ENCODE measurements at regions of chrX and their contacts with region 1.

Region 1: GRCh38 chrX:107716816-107717700 is 58.5 kb downstream of the TSC22D3 start:
- DNase-seq: peak; percentile 87 to 94 (median 93)
- H3K4me3 ChIP-seq: peak overlapping the region; percentile 58 to 91 (median 76)
- H3K27ac ChIP-seq: peak overlapping the region; percentile 73 to 81
- H3K4me1 ChIP-seq: peaks cover 10 to 54% (median 41%) of the 10 kb centered on the region in 4 experiments
- H3K27me3 ChIP-seq: peaks cover 0 to 16% (median 0%) of the 10 kb centered on the region in 5 experiments

Region 2: DNA sequence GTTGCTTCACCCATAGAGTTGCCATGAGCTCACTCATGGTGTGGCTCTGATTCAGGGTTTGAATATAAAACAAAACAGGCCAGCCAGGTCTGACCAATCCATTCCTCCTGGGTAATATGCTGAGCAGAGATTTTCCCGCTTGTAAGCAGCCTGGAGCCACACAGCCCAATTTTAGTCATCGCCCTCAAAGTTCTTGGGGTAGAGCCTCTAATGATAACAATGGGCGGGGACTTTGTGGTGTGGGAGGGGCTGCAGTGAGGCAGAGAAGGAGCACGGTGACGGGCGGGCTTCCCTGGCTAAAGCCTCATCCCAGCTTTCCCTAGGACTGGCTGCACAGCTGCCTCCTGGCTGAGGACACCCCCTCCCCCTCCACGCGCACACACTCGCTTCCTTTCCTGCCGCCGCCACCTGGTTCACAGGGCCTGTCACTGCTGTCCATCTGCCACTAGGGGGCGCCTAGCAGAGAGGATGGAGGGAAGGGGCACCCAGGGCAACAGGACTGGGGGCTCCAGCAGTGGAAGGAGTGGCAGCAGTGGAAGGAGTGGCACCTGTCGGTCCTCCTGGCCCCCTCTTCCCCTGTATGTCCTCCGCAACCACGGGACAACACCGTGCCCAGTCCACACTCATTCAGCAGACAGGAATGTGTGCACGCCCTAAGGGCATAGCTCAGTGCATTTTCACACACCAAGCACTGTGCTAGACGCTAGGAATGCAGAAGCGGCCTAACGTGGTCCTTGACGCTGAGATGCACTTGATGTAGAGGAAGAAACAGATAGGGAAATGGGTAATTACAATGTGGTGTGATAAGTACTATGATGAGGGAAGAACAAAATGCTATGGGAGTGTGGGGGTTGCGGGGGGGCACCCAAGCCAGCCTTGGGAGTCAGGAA is 61.9 kb before region 1 on chrX:
- CTCF ChIA-PET with region 1: interaction called, 13 read pairs
- POLR2A ChIA-PET with region 1: interaction called, 3 read pairs
- DNase-seq: peak in 2 of 3 donors; percentile 63 to 67
- H3K4me3 ChIP-seq: peak overlapping the region in 1 of 7 experiments; percentile 48
- H3K27ac ChIP-seq: no peak overlapping the region
- H3K4me1 ChIP-seq: peaks cover 0 to 6% (median 0%) of the 10 kb centered on the region in 4 experiments
- H3K27me3 ChIP-seq: peaks cover 0 to 7% (median 0%) of the 10 kb centered on the region in 5 experiments

Region 3: GRCh38 chrX:107684956-107685385 is 32.1 kb before region 1 on chrX:
- CTCF ChIA-PET with region 1: interaction called, 5 read pairs
- POLR2A ChIA-PET with region 1: interaction called, 12 read pairs
- DNase-seq: peak; percentile 47 to 75 (median 69)
- H3K4me3 ChIP-seq: no peak overlapping the region
- H3K27ac ChIP-seq: peak overlapping the region in 1 of 2 experiments; percentile 17
- H3K4me1 ChIP-seq: peaks cover 4 to 47% (median 36%) of the 10 kb centered on the region in 4 experiments
- H3K27me3 ChIP-seq: no peaks in the 10 kb centered on the region

Region 4: GRCh38 chrX:107731831-107732502 is 14.9 kb after region 1 on chrX:
- CTCF ChIA-PET with region 1: interaction called, 15 read pairs
- POLR2A ChIA-PET with region 1: no interaction called
- DNase-seq: peak in 2 of 3 donors; percentile 55 to 67
- H3K4me3 ChIP-seq: no peak overlapping the region
- H3K27ac ChIP-seq: no peak overlapping the region
- H3K4me1 ChIP-seq: peaks cover 0 to 11% (median 7%) of the 10 kb centered on the region in 4 experiments
- H3K27me3 ChIP-seq: peaks cover 0 to 7% (median 0%) of the 10 kb centered on the region in 5 experiments

Measured in common myeloid progenitor, CD34-positive (primary cell).